Tibial artery (tissue), 4 donors: ENCODE measurements at regions of chr5 and their contacts with region 1.

Region 1: DNA sequence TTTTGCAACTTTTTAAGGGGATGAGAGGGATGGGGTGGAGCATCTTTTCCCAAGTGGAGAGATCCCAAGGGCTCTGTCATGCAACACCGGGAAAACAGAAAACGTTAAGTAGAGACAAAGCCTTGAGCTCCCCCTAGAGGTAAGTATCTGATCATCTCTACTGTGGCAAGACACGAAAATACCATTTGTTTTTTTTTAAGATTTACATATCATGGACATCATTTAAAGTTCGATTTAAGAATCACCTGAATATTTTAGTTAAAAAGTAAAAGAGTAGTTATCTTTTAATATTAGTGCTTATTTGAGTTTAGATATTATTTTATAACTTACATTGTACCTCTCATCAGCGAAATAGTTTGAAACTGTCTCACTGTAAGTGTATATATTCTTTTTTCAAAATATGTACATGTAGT is 200.4 kb downstream of the LRRC70 start:
- DNase-seq: no peak
- H3K4me3 ChIP-seq: no peak overlapping the region
- H3K27ac ChIP-seq: no peak overlapping the region
- H3K4me1 ChIP-seq: no peaks in the 10 kb centered on the region
- H3K27me3 ChIP-seq: no peaks in the 10 kb centered on the region
- CTCF ChIP-seq: peak; percentile 50 to 52

Region 2: DNA sequence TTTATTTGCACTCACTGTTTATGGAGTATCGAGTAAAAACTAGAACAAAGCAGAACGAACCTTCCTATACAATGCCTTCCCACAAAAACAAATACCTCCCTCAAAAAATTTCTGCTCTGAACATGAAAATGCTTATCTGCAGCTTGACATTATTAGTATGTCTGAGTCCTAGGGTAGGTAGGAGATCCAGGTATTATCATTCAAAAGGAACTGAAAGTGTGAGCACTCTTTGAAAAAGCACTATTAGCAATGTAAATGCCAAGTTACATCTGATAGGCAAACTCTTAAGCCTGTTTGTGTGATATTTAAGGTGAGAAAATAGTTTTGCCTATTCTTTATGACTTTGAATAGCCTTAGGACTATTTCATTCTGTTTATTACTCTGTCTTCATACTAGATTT is 1399.3 kb before region 1 on chr5:
- intact Hi-C with region 1: no loop called
- DNase-seq: no peak
- H3K4me3 ChIP-seq: no peak overlapping the region
- H3K27ac ChIP-seq: no peak overlapping the region
- H3K4me1 ChIP-seq: no peaks in the 10 kb centered on the region
- H3K27me3 ChIP-seq: no peaks in the 10 kb centered on the region
- CTCF ChIP-seq: no peak

Region 3: GRCh38 chr5:62214701-62215100 is 564.3 kb before region 1 on chr5:
- intact Hi-C with region 1: no loop called
- DNase-seq: no peak
- H3K4me3 ChIP-seq: no peak overlapping the region
- H3K27ac ChIP-seq: no peak overlapping the region
- H3K4me1 ChIP-seq: no peaks in the 10 kb centered on the region
- H3K27me3 ChIP-seq: peaks cover 0 to 10% of the 10 kb centered on the region in 2 donors
- CTCF ChIP-seq: no peak

Region 4: GRCh38 chr5:62457071-62457470 is 321.9 kb before region 1 on chr5:
- intact Hi-C with region 1: loop called (anchors 10 kb)
- DNase-seq: no peak
- H3K4me3 ChIP-seq: no peak overlapping the region
- H3K27ac ChIP-seq: no peak overlapping the region
- H3K4me1 ChIP-seq: no peaks in the 10 kb centered on the region
- H3K27me3 ChIP-seq: no peaks in the 10 kb centered on the region
- CTCF ChIP-seq: no peak